Activated naive CD4-positive, alpha-beta T cell treated with anti-CD3 and anti-CD28 coated beads for 36 hours (primary cell): ENCODE measurements at regions of chr5 and their contacts with region 1.

Region 1: DNA sequence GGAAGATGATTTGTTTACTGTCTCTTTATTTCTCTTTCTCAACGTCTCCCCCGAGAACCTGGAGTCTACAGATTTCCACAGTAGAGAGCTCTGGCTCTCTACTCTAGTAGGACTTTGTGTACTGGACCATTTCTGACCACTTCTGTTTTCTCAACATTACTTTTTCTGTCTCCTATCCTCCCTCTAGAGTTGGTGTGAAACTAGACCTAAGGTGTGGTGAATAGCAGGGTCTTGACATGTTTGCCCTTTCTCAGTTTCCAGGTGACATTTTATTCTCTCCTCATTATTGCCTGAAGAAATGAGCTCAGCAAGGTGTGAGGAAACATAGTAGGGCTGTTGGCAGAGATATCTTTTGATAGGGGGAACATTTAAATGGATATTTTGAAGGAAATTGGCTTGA is 62.1 kb upstream of the IL6ST start:
- DNase-seq: no peak
- H3K4me3 Mint-ChIP-seq: peak overlapping the region; percentile 56
- H3K27ac Mint-ChIP-seq: peak overlapping the region; percentile 81
- H3K4me1 Mint-ChIP-seq: peaks cover 73% of the 10 kb centered on the region
- H3K27me3 Mint-ChIP-seq: no peaks in the 10 kb centered on the region

Region 2: DNA sequence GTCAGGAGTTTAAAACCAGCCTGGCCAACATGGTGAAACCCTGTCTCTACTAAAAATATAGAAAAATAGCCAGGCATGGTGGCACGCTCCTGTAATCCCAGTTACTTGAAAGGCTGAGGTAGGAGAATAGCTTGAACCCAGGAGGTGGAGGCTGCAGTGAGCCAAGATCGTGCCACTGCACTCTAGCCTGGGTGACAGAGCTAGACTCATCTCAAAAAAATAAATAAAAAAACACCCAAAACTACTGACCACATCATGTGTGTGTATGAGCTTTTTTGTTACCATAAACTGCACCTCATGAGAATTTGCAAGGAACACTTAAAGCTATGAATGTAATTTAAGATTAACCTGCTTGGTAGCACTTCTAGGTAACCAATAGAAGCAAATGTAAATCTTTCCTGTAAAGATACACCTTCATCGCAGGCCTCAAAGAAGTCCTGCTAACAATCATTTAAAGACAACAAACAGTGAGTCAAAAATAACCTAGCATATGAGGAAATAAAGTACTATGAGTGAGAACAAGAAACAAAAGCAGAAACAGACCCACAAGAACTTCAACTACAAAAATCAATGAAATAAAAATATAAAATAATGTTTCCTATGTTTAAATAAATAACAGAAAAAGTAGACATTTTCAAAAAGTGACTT is 357.7 kb before region 1 on chr5:
- CTCF ChIA-PET with region 1: no interaction called
- intact Hi-C with region 1: no loop called
- DNase-seq: no peak
- H3K4me3 Mint-ChIP-seq: no peak overlapping the region
- H3K27ac Mint-ChIP-seq: no peak overlapping the region
- H3K4me1 Mint-ChIP-seq: peaks cover 10% of the 10 kb centered on the region
- H3K27me3 Mint-ChIP-seq: no peaks in the 10 kb centered on the region

Region 3: GRCh38 chr5:56012281-56012963 is 44.5 kb before region 1 on chr5:
- CTCF ChIA-PET with region 1: interaction called, 3 read pairs
- intact Hi-C with region 1: loop called (anchors 1 kb)
- DNase-seq: peak; percentile 66
- H3K4me3 Mint-ChIP-seq: peak overlapping the region; percentile 33
- H3K27ac Mint-ChIP-seq: peak overlapping the region; percentile 77
- H3K4me1 Mint-ChIP-seq: peaks cover 41% of the 10 kb centered on the region
- H3K27me3 Mint-ChIP-seq: no peaks in the 10 kb centered on the region

Region 4: DNA sequence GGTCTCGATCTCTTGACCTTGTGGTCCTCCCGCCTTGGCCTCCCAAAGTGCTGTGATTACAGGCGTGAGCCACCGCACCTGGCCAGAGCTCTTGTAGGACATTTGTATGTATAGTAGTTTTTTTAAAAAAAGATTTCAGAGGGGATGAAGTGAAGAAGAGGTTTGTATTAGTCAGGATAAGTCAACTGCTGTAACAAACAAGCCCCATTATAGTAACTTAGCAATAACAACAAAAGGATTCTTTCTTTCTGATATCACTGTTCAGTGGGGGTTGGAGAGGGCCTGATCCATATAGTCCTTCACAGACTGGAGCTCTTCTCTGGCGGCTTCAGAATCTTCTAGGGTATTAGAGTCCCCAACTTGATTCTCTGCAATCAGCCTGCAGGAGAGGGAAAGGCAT is 11.4 kb before region 1 on chr5:
- CTCF ChIA-PET with region 1: interaction called, 3 read pairs
- intact Hi-C with region 1: loop called (anchors 1 kb)
- DNase-seq: no peak
- H3K4me3 Mint-ChIP-seq: no peak overlapping the region
- H3K27ac Mint-ChIP-seq: no peak overlapping the region
- H3K4me1 Mint-ChIP-seq: peaks cover 47% of the 10 kb centered on the region
- H3K27me3 Mint-ChIP-seq: no peaks in the 10 kb centered on the region

Region 5: DNA sequence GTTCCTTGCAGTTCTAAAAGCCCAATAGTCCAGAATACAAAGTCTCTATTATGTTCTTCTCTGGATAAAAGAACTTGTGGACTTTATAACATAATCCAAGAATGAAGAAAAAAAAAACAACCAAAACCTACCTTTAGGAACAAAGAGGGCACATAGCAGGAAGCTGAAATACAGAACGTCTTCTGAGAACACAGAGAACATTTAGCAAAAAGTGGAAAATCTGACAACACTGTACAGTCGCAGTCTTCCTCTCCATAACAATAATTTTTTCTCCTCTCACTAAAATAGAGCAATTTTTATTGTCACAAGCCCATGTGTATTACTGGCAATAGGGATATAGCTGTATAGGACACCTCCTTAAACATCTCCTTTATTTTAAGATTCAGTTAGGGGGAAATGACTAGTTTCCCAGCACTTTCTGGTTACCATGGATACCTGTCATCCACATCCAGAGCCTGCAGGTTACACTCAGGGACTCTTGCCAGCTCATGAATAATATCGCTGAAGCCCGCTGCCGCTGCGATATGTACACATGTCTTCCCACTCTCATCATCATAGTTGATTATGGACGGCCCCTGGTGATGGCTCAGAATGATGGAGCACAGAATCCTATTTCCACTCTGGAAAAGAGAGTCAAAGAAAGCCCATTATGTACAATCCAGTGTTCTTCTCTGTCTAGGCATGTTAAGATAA is 69.8 kb after region 1 on chr5:
- CTCF ChIA-PET with region 1: interaction called, 4 read pairs
- intact Hi-C with region 1: loop called (anchors 2 kb)
- DNase-seq: peak; percentile 83
- H3K4me3 Mint-ChIP-seq: peak overlapping the region; percentile 74
- H3K27ac Mint-ChIP-seq: peak overlapping the region; percentile 97
- H3K4me1 Mint-ChIP-seq: peaks cover 75% of the 10 kb centered on the region
- H3K27me3 Mint-ChIP-seq: no peaks in the 10 kb centered on the region